ENCODE measurements at regions of chr10 and their contacts with region 1.

Region 1: GRCh38 chr10:24617771-24618391 is 105.8 kb downstream of the ARHGAP21 start:
- DNase-seq: no peak
- ATAC-seq: peak; percentile 88
- H3K4me3 ChIP-seq: no peak overlapping the region
- H3K27ac ChIP-seq: no peak overlapping the region
- H3K4me1 ChIP-seq: no peaks in the 10 kb centered on the region
- H3K27me3 ChIP-seq: no peaks in the 10 kb centered on the region
- CTCF ChIP-seq: peak; percentile 73 to 84 (median 80)
- EP300 ChIP-seq: no peak
- POLR2A ChIP-seq: no peak
- RAD21 ChIP-seq: peak; percentile 56

Region 2: GRCh38 chr10:24027113-24027512 is 590.8 kb before region 1 on chr10:
- CTCF ChIA-PET with region 1: no interaction called
- POLR2A ChIA-PET with region 1: no interaction called
- RAD21 ChIA-PET with region 1: no interaction called
- SMC1A ChIA-PET with region 1: no interaction called
- in situ Hi-C with region 1: no loop called
- intact Hi-C with region 1: no loop called
- DNase-seq: no peak
- ATAC-seq: no peak
- H3K4me3 ChIP-seq: no peak overlapping the region
- H3K27ac ChIP-seq: no peak overlapping the region
- H3K4me1 ChIP-seq: no peaks in the 10 kb centered on the region
- H3K27me3 ChIP-seq: no peaks in the 10 kb centered on the region
- CTCF ChIP-seq: no peak
- EP300 ChIP-seq: no peak
- POLR2A ChIP-seq: no peak
- RAD21 ChIP-seq: no peak

Region 3: GRCh38 chr10:24483489-24484100 is 134.3 kb before region 1 on chr10:
- CTCF ChIA-PET with region 1: no interaction called
- POLR2A ChIA-PET with region 1: no interaction called
- RAD21 ChIA-PET with region 1: no interaction called
- SMC1A ChIA-PET with region 1: no interaction called
- in situ Hi-C with region 1: no loop called
- intact Hi-C with region 1: no loop called
- DNase-seq: no peak
- ATAC-seq: peak; percentile 83
- H3K4me3 ChIP-seq: no peak overlapping the region
- H3K27ac ChIP-seq: no peak overlapping the region
- H3K4me1 ChIP-seq: no peaks in the 10 kb centered on the region
- H3K27me3 ChIP-seq: no peaks in the 10 kb centered on the region
- CTCF ChIP-seq: no peak
- EP300 ChIP-seq: no peak
- POLR2A ChIP-seq: no peak
- RAD21 ChIP-seq: no peak

Region 4: GRCh38 chr10:24597426-24597825 is 20.5 kb before region 1 on chr10:
- CTCF ChIA-PET with region 1: interaction called, 23 read pairs
- POLR2A ChIA-PET with region 1: interaction called, 4 read pairs
- RAD21 ChIA-PET with region 1: interaction called, 3 read pairs
- SMC1A ChIA-PET with region 1: interaction called, 5 read pairs
- in situ Hi-C with region 1: no loop called
- intact Hi-C with region 1: no loop called
- DNase-seq: no peak
- ATAC-seq: no peak
- H3K4me3 ChIP-seq: no peak overlapping the region
- H3K27ac ChIP-seq: no peak overlapping the region
- H3K4me1 ChIP-seq: no peaks in the 10 kb centered on the region
- H3K27me3 ChIP-seq: no peaks in the 10 kb centered on the region
- CTCF ChIP-seq: no peak
- EP300 ChIP-seq: no peak
- POLR2A ChIP-seq: no peak
- RAD21 ChIP-seq: no peak

Region 5: GRCh38 chr10:24685958-24686540 is 68.2 kb after region 1 on chr10:
- CTCF ChIA-PET with region 1: interaction called, 10 read pairs
- POLR2A ChIA-PET with region 1: no interaction called
- RAD21 ChIA-PET with region 1: no interaction called
- SMC1A ChIA-PET with region 1: interaction called, 3 read pairs
- in situ Hi-C with region 1: no loop called
- intact Hi-C with region 1: no loop called
- DNase-seq: no peak
- ATAC-seq: no peak
- H3K4me3 ChIP-seq: no peak overlapping the region
- H3K27ac ChIP-seq: no peak overlapping the region
- H3K4me1 ChIP-seq: no peaks in the 10 kb centered on the region
- H3K27me3 ChIP-seq: no peaks in the 10 kb centered on the region
- CTCF ChIP-seq: no peak
- EP300 ChIP-seq: no peak
- POLR2A ChIP-seq: no peak
- RAD21 ChIP-seq: no peak

Region 6: DNA sequence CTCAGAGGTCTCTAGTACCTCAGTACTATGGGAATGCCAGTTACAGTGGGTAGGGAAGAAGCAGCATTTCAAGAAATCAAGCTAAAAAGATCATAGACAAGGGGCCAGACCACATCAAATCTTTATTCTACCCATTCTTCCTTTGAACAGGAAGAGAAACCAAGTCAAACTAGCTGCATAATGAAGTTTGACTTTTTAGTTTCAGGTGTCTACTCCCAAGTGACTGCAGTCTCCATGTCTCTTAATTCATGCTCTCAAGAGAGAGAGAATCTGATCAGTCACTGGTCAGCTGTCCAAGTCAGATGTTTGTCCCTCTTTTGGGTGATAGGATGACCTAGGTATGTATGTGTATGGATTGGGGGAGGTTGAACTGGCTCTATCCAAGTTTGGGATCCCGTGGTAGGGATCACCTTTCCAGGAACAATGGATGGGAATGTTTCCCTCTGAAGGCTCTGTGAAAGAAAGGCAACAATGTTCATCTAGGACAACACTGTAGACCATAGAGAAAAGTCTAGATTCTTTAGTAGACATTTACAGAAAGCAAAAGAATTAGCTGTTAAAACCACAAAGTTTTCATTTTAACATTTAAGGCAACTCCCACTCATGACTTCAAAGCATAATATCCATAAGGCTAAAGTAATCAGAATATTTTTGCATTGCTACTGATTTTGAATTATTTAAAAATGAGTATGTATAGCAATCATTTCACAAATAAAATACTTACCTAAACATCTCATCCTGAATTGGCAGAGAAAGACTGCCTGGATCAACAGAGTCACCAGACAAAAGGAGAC is 364.6 kb after region 1 on chr10:
- CTCF ChIA-PET with region 1: interaction called, 79 read pairs
- POLR2A ChIA-PET with region 1: no interaction called
- RAD21 ChIA-PET with region 1: interaction called, 4 read pairs
- SMC1A ChIA-PET with region 1: interaction called, 10 read pairs
- in situ Hi-C with region 1: no loop called
- intact Hi-C with region 1: no loop called
- DNase-seq: peak; percentile 42
- ATAC-seq: peak; percentile 31; the same call in 2 of the 3 replicates
- H3K4me3 ChIP-seq: no peak overlapping the region
- H3K27ac ChIP-seq: no peak overlapping the region
- H3K4me1 ChIP-seq: peaks cover 4% of the 10 kb centered on the region
- H3K27me3 ChIP-seq: no peaks in the 10 kb centered on the region
- CTCF ChIP-seq: no peak
- EP300 ChIP-seq: no peak
- POLR2A ChIP-seq: no peak
- RAD21 ChIP-seq: no peak

Region 7: DNA sequence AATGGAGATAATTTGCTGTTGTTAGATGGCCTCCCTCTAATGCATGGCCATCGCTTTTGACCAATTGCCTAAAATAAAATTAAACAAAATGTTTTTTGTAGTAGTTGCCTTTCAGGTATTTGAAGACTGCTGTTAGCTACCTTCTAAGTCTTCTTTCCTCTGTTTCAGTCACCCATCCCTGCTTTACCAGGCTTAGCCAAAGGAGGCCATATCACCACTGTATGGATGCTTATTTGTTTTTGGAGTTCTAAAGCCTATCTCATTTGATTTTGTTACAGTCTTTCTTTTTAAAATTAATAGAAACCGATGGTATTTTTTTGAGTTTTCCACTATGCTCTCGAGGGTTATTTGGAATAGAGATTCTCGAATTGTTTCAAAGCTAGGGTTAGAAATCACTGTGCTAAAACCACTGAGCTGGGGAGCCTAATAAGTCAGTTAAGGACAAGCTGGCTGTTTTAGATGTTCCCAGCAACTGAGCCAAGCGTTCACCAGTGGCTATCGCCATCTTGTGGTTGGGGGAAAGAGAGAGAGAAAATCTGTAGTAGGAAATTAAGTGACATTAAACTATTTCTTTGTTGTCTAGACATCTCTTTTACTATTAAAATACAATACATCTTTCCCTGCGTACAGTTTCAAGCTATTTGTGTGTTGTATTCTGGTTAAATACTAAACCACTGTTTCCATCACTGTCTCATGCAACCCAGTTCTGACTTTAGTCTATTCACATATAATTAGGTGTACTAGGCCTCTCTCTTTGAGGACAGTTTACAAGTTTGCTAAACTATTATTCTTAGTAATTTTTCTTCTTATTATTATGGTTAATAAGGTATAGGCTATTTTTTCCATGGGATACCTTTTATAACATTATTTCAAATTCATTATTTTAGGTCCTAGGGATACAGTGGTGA is 609.1 kb after region 1 on chr10:
- CTCF ChIA-PET with region 1: interaction called, 5 read pairs
- POLR2A ChIA-PET with region 1: no interaction called
- RAD21 ChIA-PET with region 1: interaction called, 4 read pairs
- SMC1A ChIA-PET with region 1: no interaction called
- in situ Hi-C with region 1: no loop called
- intact Hi-C with region 1: loop called (anchors 10 kb)
- DNase-seq: peak; percentile 4
- ATAC-seq: peak; percentile 80
- H3K4me3 ChIP-seq: no peak overlapping the region
- H3K27ac ChIP-seq: no peak overlapping the region
- H3K4me1 ChIP-seq: no peaks in the 10 kb centered on the region
- H3K27me3 ChIP-seq: no peaks in the 10 kb centered on the region
- CTCF ChIP-seq: peak; percentile 50 to 74 (median 59)
- EP300 ChIP-seq: no peak
- POLR2A ChIP-seq: no peak
- RAD21 ChIP-seq: peak; percentile 62

Measured in GM12878 (cell line).